ENCODE measurements at regions of chr3 and their contacts with region 1.

Region 1: GRCh38 chr3:146589899-146590508 is 15.1 kb downstream of the PLSCR5 start:
- DNase-seq: peak in 2 of 4 donors; percentile 20 to 60
- ATAC-seq: peak; percentile 61
- H3K4me3 ChIP-seq: no peak overlapping the region
- H3K27ac ChIP-seq: no peak overlapping the region
- H3K4me1 ChIP-seq: no peaks in the 10 kb centered on the region
- H3K27me3 ChIP-seq: no peaks in the 10 kb centered on the region
- CTCF ChIP-seq: peak; percentile 36 to 46

Region 2: GRCh38 chr3:146218880-146219866 is 370.8 kb before region 1 on chr3:
- intact Hi-C with region 1: loop called in 1 of 2 experiments (anchors 10 kb)
- DNase-seq: peak in 2 of 4 donors; percentile 42 to 48
- ATAC-seq: peak; percentile 33
- H3K4me3 ChIP-seq: no peak overlapping the region
- H3K27ac ChIP-seq: no peak overlapping the region
- H3K4me1 ChIP-seq: peaks cover 3 to 24% of the 10 kb centered on the region in 2 donors
- H3K27me3 ChIP-seq: no peaks in the 10 kb centered on the region
- CTCF ChIP-seq: peak; percentile 51 to 55

Region 3: GRCh38 chr3:146342989-146343388 is 247.0 kb before region 1 on chr3:
- intact Hi-C with region 1: loop called in 1 of 2 experiments (anchors 10 kb)
- DNase-seq: peak in 2 of 4 donors; percentile 40 to 50
- ATAC-seq: no peak
- H3K4me3 ChIP-seq: no peak overlapping the region
- H3K27ac ChIP-seq: no peak overlapping the region
- H3K4me1 ChIP-seq: no peaks in the 10 kb centered on the region
- H3K27me3 ChIP-seq: no peaks in the 10 kb centered on the region
- CTCF ChIP-seq: no peak

Region 4: GRCh38 chr3:146747928-146748327 is 157.9 kb after region 1 on chr3:
- intact Hi-C with region 1: no loop called
- DNase-seq: peak in 2 of 4 donors; percentile 2 to 31
- ATAC-seq: no peak
- H3K4me3 ChIP-seq: no peak overlapping the region
- H3K27ac ChIP-seq: no peak overlapping the region
- H3K4me1 ChIP-seq: no peaks in the 10 kb centered on the region
- H3K27me3 ChIP-seq: no peaks in the 10 kb centered on the region
- CTCF ChIP-seq: peak in 1 of 2 donors; percentile 22

Region 5: DNA sequence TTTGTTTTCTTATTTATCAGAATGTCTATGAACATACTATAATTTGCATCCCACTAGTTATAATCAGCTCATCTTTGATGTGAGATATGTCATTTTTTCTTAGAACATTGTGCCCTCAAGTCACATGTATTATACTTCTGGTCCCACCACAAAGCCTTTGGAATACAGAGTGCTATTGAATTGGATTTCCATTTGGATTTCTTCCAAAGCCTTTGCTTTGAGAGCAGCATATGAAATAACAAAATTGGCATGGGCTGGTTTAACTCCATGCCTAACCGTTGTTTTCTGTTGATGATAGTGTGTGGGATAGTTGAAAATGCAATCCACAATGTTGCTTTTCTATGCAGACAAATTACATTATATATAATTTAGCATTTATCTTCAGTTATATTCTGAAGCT is 299.6 kb after region 1 on chr3:
- intact Hi-C with region 1: no loop called
- DNase-seq: no peak
- ATAC-seq: no peak
- H3K4me3 ChIP-seq: no peak overlapping the region
- H3K27ac ChIP-seq: no peak overlapping the region
- H3K4me1 ChIP-seq: no peaks in the 10 kb centered on the region
- H3K27me3 ChIP-seq: no peaks in the 10 kb centered on the region
- CTCF ChIP-seq: no peak

Measured in left lung (tissue), 14 donors.